K562 (cell line): ENCODE measurements at regions of chr6 and their contacts with region 1.

Region 1: GRCh38 chr6:147216915-147217314 is 12.7 kb downstream of the STXBP5 start:
- DNase-seq: no peak
- ATAC-seq: peak; percentile 13
- H3K4me3 ChIP-seq: no peak overlapping the region
- H3K27ac ChIP-seq: peak overlapping the region; percentile 15; the same call in 1 of the 3 replicates
- H3K4me1 ChIP-seq: peaks cover 4 to 43% of the 10 kb centered on the region in 2 experiments; a peak in 4 of 5 replicates
- H3K27me3 ChIP-seq: no peaks in the 10 kb centered on the region
- CTCF ChIP-seq: no peak
- EP300 ChIP-seq: no peak
- POLR2A ChIP-seq: no peak
- RAD21 ChIP-seq: no peak

Region 2: DNA sequence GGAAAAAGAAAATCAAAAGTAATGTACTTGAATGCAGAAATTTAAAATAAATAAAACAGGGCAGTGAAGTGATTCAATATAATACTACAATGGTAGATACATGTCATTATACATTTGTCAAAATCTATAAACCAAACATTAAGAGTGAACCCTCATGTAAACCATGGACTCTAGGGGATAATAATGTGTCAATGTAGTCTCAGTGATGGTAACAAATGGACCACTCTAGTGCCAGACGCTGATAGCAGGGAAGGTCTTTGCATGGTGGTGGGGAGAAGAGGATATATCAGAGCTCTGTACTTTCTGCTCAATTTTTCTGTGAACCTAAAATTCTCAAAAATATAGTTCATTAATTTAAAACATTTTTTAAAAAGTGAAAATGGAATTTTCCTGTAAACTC is 32.5 kb before region 1 on chr6:
- CTCF ChIA-PET with region 1: no interaction called
- POLR2A ChIA-PET with region 1: no interaction called
- in situ Hi-C with region 1: no loop called
- intact Hi-C with region 1: no loop called
- DNase-seq: no peak
- ATAC-seq: no peak
- H3K4me3 ChIP-seq: no peak overlapping the region
- H3K27ac ChIP-seq: no peak overlapping the region
- H3K4me1 ChIP-seq: peaks cover 0 to 5% of the 10 kb centered on the region in 2 experiments; a peak in 2 of 5 replicates
- H3K27me3 ChIP-seq: no peaks in the 10 kb centered on the region; a peak in 1 of 5 replicates
- CTCF ChIP-seq: no peak
- EP300 ChIP-seq: no peak
- POLR2A ChIP-seq: no peak
- RAD21 ChIP-seq: no peak

Region 3: GRCh38 chr6:147227770-147228320 is 10.9 kb after region 1 on chr6:
- CTCF ChIA-PET with region 1: no interaction called
- POLR2A ChIA-PET with region 1: interaction called, 13 read pairs
- in situ Hi-C with region 1: no loop called
- intact Hi-C with region 1: no loop called
- DNase-seq: peak in 1 of 4 experiments; percentile 31
- ATAC-seq: peak; percentile 52
- H3K4me3 ChIP-seq: no peak overlapping the region
- H3K27ac ChIP-seq: peak overlapping the region; percentile 0; the same call in 1 of the 3 replicates
- H3K4me1 ChIP-seq: peaks cover 0 to 18% of the 10 kb centered on the region in 2 experiments; a peak in 3 of 5 replicates
- H3K27me3 ChIP-seq: no peaks in the 10 kb centered on the region
- CTCF ChIP-seq: no peak
- EP300 ChIP-seq: no peak
- POLR2A ChIP-seq: 0 out of 2 replicates have a peak, but pooled peaks have one; percentile 38
- RAD21 ChIP-seq: no peak